SK-N-SH (cell line): ENCODE measurements at regions of chr11 and their contacts with region 1.

Region 1: DNA sequence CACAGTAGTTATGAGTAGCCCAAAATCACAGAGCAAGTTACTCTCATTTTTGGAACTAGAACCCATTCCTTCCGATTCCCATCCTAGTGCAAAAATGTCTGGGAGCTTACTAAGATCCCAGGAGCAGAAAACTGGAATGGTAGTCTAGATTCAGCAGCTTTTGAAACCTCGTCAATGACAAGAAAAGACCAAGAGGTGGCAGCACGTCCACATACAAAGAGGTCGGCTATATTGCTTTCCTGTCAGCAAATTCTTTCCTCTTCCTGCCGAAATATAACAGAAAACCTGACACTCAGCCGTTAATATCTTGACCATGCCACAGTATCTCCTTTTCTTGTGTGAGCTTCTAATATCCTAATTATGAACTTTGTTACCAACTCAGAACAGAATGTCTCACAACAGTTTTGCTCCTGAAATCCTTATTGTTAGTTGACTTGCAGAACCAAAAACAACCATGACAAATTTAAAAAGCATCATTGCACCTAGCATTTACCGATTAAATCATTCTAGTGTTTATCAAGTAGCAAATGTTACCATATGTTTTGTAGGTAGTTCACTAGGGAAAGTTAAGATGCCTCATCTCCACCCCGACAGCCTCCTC is 92.8 kb upstream of the OR9G4 start:
- DNase-seq: peak; percentile 60
- H3K4me3 ChIP-seq: no peak overlapping the region; a peak in 1 of 4 replicates
- H3K27ac ChIP-seq: peak overlapping the region in 1 of 2 experiments; percentile 94; a peak in 2 of 4 replicates
- H3K4me1 ChIP-seq: peaks cover 0 to 4% of the 10 kb centered on the region in 2 experiments; a peak in 2 of 4 replicates
- H3K27me3 ChIP-seq: no peaks in the 10 kb centered on the region
- CTCF ChIP-seq: peak; percentile 79
- EP300 ChIP-seq: no peak
- RAD21 ChIP-seq: peak; percentile 96

Region 2: GRCh38 chr11:56522008-56522407 is 319.3 kb before region 1 on chr11:
- CTCF ChIA-PET with region 1: no interaction called
- POLR2A ChIA-PET with region 1: no interaction called
- DNase-seq: peak; percentile 2
- H3K4me3 ChIP-seq: peak overlapping the region in 1 of 2 experiments; percentile 11; a peak in 1 of 4 replicates
- H3K27ac ChIP-seq: no peak overlapping the region
- H3K4me1 ChIP-seq: no peaks in the 10 kb centered on the region
- H3K27me3 ChIP-seq: no peaks in the 10 kb centered on the region
- CTCF ChIP-seq: peak; percentile 38
- EP300 ChIP-seq: no peak
- RAD21 ChIP-seq: peak; percentile 26; the same call in 1 of the 2 replicates

Region 3: DNA sequence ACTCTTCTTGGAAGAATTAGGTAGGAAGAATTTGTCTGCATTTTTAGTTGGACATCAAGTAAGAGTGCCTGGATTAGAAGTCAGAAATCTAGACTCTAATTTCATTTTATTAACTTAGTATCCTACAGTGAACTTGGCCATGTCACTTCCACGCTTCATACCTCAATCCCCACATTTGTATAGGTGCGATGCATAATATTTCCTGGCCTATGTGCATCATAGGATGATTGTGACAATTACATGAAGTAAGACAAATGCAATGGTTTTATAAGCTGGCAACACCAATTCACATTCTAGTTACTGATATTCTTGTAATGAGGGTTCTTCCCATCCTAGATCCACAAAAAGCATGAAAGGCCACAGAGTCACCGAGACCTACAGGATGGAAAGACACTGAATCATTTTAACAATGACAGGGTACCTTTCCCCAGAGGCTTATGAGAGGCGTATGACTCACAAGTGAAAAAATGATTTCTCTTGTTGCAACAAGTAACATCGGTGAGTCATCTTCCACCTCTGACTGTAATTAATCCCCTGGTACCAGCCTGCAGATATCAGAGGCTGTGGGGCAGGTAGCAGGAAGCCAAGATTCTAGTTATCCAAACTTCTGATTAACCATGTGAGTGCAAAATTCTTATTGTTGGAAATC is 91.4 kb after region 1 on chr11:
- CTCF ChIA-PET with region 1: no interaction called
- POLR2A ChIA-PET with region 1: no interaction called
- DNase-seq: no peak
- H3K4me3 ChIP-seq: no peak overlapping the region
- H3K27ac ChIP-seq: no peak overlapping the region
- H3K4me1 ChIP-seq: no peaks in the 10 kb centered on the region
- H3K27me3 ChIP-seq: no peaks in the 10 kb centered on the region
- CTCF ChIP-seq: no peak
- EP300 ChIP-seq: no peak
- RAD21 ChIP-seq: no peak

Region 4: GRCh38 chr11:57116654-57117053 is 275.3 kb after region 1 on chr11:
- CTCF ChIA-PET with region 1: interaction called, 13 read pairs
- POLR2A ChIA-PET with region 1: no interaction called
- DNase-seq: peak; percentile 28
- H3K4me3 ChIP-seq: no peak overlapping the region
- H3K27ac ChIP-seq: no peak overlapping the region
- H3K4me1 ChIP-seq: no peaks in the 10 kb centered on the region
- H3K27me3 ChIP-seq: no peaks in the 10 kb centered on the region
- CTCF ChIP-seq: peak; percentile 53
- EP300 ChIP-seq: no peak
- RAD21 ChIP-seq: peak; percentile 72

Region 5: DNA sequence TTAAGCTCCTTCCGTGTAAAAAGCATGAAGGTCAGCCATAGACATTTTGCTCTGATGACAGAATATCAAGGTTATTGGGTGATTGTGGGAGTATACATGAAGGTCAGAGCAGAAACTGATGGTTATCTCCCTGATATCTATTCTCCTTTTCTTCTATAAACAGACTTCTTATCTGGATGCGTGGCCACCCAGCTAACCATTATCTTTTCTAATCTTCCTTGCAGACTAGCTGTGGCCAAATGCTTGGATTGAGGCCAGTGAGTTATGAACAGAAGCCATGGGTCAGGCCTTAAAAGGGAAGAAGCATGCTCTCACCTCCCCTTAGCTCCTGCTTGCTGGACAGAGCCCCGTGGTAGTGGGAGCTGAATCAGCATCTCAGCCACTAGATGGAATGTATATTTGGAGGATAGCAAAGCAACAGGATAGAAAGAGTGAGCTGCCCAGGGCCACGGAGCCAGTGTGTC is 309.2 kb after region 1 on chr11:
- CTCF ChIA-PET with region 1: interaction called, 11 read pairs
- POLR2A ChIA-PET with region 1: no interaction called
- DNase-seq: peak; percentile 41
- H3K4me3 ChIP-seq: no peak overlapping the region
- H3K27ac ChIP-seq: peak overlapping the region in 1 of 2 experiments; percentile 96; a peak in 2 of 4 replicates
- H3K4me1 ChIP-seq: peaks cover 0 to 43% of the 10 kb centered on the region in 2 experiments; a peak in 2 of 4 replicates
- H3K27me3 ChIP-seq: no peaks in the 10 kb centered on the region
- CTCF ChIP-seq: no peak
- EP300 ChIP-seq: peak; percentile 28 to 94; a peak in 2 of 4 replicates
- RAD21 ChIP-seq: peak; percentile 22; the same call in 1 of the 2 replicates

Region 6: DNA sequence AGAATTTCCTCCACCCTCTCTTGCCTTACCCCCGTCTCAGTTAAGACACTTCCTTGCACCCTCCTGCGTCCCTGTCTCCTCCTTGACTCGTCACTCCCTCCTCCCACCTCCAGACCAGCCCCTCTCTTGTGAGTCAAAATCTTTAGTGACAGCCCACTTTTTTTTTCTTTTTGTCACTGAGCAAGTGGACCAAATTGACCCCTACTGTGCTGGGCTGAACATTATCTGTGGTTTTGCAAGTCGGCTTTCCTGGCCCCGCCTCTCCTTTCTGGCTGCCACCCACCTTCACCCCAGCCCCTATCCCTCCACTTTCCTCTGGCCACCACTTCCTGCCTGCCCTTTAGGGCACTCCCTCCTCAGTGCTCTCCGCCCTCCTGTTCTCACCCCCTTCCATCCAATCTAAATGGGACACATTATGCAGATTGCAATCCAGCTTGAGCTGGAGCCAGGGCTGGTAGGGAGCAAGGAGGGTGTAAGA is 395.9 kb after region 1 on chr11 and contains the start of gene APLNR:
- CTCF ChIA-PET with region 1: interaction called, 28 read pairs
- POLR2A ChIA-PET with region 1: no interaction called
- DNase-seq: no peak
- H3K4me3 ChIP-seq: no peak within 1 kb of the TSS
- H3K27ac ChIP-seq: peak within 1 kb of the TSS in 1 of 2 experiments; percentile 48; a peak in 2 of 4 replicates
- H3K4me1 ChIP-seq: peaks cover 0 to 41% of the 10 kb centered on the region in 2 experiments; a peak in 2 of 4 replicates
- H3K27me3 ChIP-seq: peaks cover 2% of the 10 kb centered on the region; the same call in 1 of the 2 replicates
- CTCF ChIP-seq: no peak
- EP300 ChIP-seq: no peak
- RAD21 ChIP-seq: no peak
- polyA plus RNA-seq, gene APLNR: 0.03 and 0.15 TPM in 2 replicates

Region 7: DNA sequence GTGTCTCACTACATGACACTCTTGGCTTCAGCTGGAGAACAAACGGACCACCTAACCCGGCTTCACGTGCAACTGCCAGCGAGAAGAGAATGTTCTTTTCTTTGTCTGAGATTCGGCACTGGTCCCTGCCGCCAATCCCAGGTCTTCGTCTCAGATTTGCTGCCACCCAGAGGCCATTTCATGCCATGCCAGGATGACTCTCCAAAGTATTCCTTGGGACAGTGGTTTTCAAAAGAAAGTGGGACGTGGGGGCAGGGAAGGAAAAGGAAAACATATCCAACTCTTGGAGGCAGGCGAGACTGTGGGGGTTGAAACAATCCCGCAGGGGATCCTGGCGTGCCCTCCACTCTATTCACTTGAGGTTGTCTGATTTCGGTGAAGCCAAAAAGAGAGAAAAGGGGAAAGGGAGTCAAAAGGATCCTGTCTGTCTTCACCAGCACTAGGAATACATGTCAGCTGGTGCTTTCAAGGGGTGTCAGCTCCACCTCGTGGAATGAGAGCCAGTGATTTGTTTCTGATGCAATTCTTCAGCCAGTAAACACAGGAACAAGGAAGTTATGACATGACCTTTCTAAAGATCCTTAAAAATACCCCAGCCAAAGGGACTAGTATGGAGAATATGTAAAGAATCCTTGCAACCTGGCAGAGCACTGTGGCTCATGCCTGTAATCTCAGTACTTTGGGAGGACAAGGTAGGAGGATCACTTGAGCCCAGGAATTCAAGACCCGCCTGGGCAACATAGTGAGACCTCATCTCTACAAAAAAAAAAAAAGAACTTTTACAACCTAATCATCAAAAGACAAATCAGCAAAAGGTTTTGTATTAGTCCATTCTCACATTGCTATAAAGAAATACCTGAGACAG is 436.8 kb after region 1 on chr11:
- CTCF ChIA-PET with region 1: interaction called, 21 read pairs
- POLR2A ChIA-PET with region 1: no interaction called
- DNase-seq: peak; percentile 73
- H3K4me3 ChIP-seq: peak overlapping the region in 1 of 2 experiments; percentile 39; a peak in 1 of 4 replicates
- H3K27ac ChIP-seq: peak overlapping the region in 1 of 2 experiments; percentile 32; a peak in 3 of 4 replicates
- H3K4me1 ChIP-seq: peaks cover 4 to 5% of the 10 kb centered on the region in 2 experiments; a peak in 1 of 4 replicates
- H3K27me3 ChIP-seq: no peaks in the 10 kb centered on the region
- CTCF ChIP-seq: peak; percentile 90
- EP300 ChIP-seq: no peak
- RAD21 ChIP-seq: peak; percentile 73

Region 8: DNA sequence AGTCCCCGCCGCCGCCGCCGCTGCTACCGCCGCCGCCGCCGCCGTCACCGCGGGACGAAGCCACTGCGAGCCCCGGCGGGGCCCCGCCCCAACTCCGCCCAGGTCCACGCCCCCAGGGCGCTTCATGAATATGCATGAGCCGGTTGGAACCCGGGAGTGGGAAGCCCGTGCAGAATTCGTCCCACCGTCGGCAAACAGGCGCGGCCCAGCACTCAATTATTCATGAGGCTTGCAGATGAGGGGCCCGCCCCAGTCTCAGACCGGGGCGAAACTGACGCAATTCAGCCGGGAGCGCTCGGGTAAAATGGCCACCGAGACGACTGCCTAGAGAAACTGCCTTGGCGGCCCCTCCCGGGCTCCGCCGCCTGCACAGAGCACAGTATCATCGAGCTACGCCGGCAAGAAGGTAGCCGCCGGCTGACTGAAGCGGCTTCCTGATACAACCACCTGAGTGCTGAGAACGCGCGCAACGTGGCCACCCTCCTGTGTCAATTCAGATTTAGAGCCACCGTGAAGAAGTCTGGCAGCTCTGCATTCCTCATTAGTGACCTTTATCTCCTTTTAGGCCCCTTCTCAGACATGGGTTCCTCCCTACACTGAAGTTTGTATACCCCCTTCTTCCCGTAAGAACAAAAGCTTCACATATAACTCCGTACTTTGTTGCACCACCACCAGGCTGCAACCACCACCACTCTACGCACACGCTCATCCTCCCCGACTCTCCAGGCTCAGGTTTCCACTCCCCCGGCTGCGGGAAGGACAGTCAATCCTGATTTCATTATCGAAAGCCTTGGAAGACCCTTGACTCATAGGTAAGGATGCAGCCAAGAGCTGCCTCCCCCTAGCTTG is 483.8 kb after region 1 on chr11 and contains the start of gene TNKS1BP1:
- CTCF ChIA-PET with region 1: no interaction called
- POLR2A ChIA-PET with region 1: no interaction called
- DNase-seq: peak; percentile 94
- H3K4me3 ChIP-seq: peak within 1 kb of the TSS; percentile 84 to 86
- H3K27ac ChIP-seq: peak within 1 kb of the TSS; percentile 89 to 90
- H3K4me1 ChIP-seq: peaks cover 40 to 42% of the 10 kb centered on the region in 2 experiments
- H3K27me3 ChIP-seq: no peaks in the 10 kb centered on the region
- CTCF ChIP-seq: peak; percentile 19; the same call in 1 of the 2 replicates
- EP300 ChIP-seq: no peak
- RAD21 ChIP-seq: no peak
- polyA plus RNA-seq, gene TNKS1BP1: 29.6 and 43.3 TPM in 2 replicates